Psoas muscle (tissue), 8 donors: ENCODE measurements at regions of chr19 and their contacts with region 1.

Region 1: GRCh38 chr19:48965040-48965805 is at the start of gene FTL:
- DNase-seq: peak; percentile 98 to 99
- ATAC-seq: peak; percentile 77 to 85 (median 83)
- H3K4me3 ChIP-seq: peak within 1 kb of the TSS; percentile 94
- H3K27ac ChIP-seq: peak within 1 kb of the TSS; percentile 89
- H3K4me1 ChIP-seq: peaks cover 36% of the 10 kb centered on the region
- H3K27me3 ChIP-seq: no peaks in the 10 kb centered on the region
- CTCF ChIP-seq: no peak
- total RNA-seq, gene FTL: 802 to 2,269 (median 1,158) TPM

Region 2: GRCh38 chr19:48637170-48637947 is 327.9 kb before region 1 on chr19 and contains the start of gene DBP:
- intact Hi-C with region 1: loop called in 1 of 2 experiments (anchors 10 kb)
- DNase-seq: peak; percentile 99 to 100
- ATAC-seq: peak; percentile 75 to 80 (median 76)
- H3K4me3 ChIP-seq: peak within 1 kb of the TSS; percentile 87
- H3K27ac ChIP-seq: peak within 1 kb of the TSS; percentile 97
- H3K4me1 ChIP-seq: peaks cover 33% of the 10 kb centered on the region
- H3K27me3 ChIP-seq: no peaks in the 10 kb centered on the region
- CTCF ChIP-seq: no peak
- total RNA-seq, gene DBP: 3.6 to 14.5 (median 6.5) TPM

Region 3: GRCh38 chr19:48780631-48781391 is 184.4 kb before region 1 on chr19:
- intact Hi-C with region 1: loop called in 1 of 2 experiments (anchors 2 kb)
- DNase-seq: peak in 1 of 2 donors; percentile 48
- ATAC-seq: peak; percentile 33 to 55 (median 44)
- H3K4me3 ChIP-seq: no peak overlapping the region
- H3K27ac ChIP-seq: peak overlapping the region; percentile 70
- H3K4me1 ChIP-seq: no peaks in the 10 kb centered on the region
- H3K27me3 ChIP-seq: no peaks in the 10 kb centered on the region
- CTCF ChIP-seq: no peak

Region 4: GRCh38 chr19:48872182-48872883 is 92.9 kb before region 1 on chr19 and contains the start of gene PPP1R15A:
- intact Hi-C with region 1: loop called (anchors 5 kb)
- DNase-seq: peak; percentile 97 to 99
- ATAC-seq: peak; percentile 69 to 77 (median 74)
- H3K4me3 ChIP-seq: peak within 1 kb of the TSS; percentile 99
- H3K27ac ChIP-seq: peak within 1 kb of the TSS; percentile 100
- H3K4me1 ChIP-seq: peaks cover 38% of the 10 kb centered on the region
- H3K27me3 ChIP-seq: no peaks in the 10 kb centered on the region
- CTCF ChIP-seq: peak; percentile 20
- total RNA-seq, gene PPP1R15A: 34.5 to 93.4 (median 41.3) TPM